CD14-positive monocyte (primary cell): ENCODE measurements at regions of chr1 and their contacts with region 1.

Region 1: DNA sequence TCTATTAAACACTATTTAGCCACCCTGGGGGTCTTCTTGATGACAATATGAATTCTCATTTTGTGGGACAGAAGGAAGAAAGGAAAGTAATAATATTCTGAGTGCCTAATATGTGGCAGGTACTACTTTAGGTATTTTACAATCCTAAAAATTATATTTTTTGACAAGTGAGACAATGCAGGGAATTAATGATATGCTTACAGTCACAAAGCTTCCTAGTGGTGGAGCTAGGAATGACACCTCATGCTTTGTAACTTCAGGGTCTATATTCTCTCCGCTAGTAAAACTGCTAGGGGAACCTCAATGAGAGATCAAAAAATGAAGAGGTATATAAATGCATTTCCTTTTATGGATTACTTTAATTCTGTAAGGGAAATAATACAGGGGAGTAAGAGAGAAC is 44.3 kb downstream of the TPR start:
- DNase-seq: no peak
- H3K4me3 ChIP-seq: no peak overlapping the region
- H3K4me3 Mint-ChIP-seq: no peak overlapping the region
- H3K27ac ChIP-seq: no peak overlapping the region
- H3K27ac Mint-ChIP-seq: no peak overlapping the region
- H3K4me1 ChIP-seq: no peaks in the 10 kb centered on the region
- H3K4me1 Mint-ChIP-seq: no peaks in the 10 kb centered on the region
- H3K27me3 ChIP-seq: no peaks in the 10 kb centered on the region
- H3K27me3 Mint-ChIP-seq: no peaks in the 10 kb centered on the region
- CTCF ChIP-seq: peak; percentile 69

Region 2: GRCh38 chr1:184716158-184716557 is 1614.6 kb before region 1 on chr1:
- intact Hi-C with region 1: loop called (anchors 10 kb)
- DNase-seq: no peak
- H3K4me3 ChIP-seq: no peak overlapping the region
- H3K4me3 Mint-ChIP-seq: no peak overlapping the region
- H3K27ac ChIP-seq: no peak overlapping the region
- H3K27ac Mint-ChIP-seq: no peak overlapping the region
- H3K4me1 ChIP-seq: no peaks in the 10 kb centered on the region
- H3K4me1 Mint-ChIP-seq: no peaks in the 10 kb centered on the region
- H3K27me3 ChIP-seq: no peaks in the 10 kb centered on the region
- H3K27me3 Mint-ChIP-seq: no peaks in the 10 kb centered on the region
- CTCF ChIP-seq: no peak

Region 3: GRCh38 chr1:185984113-185984836 is 346.5 kb before region 1 on chr1:
- intact Hi-C with region 1: no loop called
- DNase-seq: no peak
- H3K4me3 ChIP-seq: no peak overlapping the region
- H3K4me3 Mint-ChIP-seq: no peak overlapping the region
- H3K27ac ChIP-seq: no peak overlapping the region
- H3K27ac Mint-ChIP-seq: no peak overlapping the region
- H3K4me1 ChIP-seq: no peaks in the 10 kb centered on the region
- H3K4me1 Mint-ChIP-seq: no peaks in the 10 kb centered on the region
- H3K27me3 ChIP-seq: no peaks in the 10 kb centered on the region
- H3K27me3 Mint-ChIP-seq: peaks cover 1 to 2% (median 2%) of the 10 kb centered on the region in 3 donors
- CTCF ChIP-seq: no peak

Region 4: DNA sequence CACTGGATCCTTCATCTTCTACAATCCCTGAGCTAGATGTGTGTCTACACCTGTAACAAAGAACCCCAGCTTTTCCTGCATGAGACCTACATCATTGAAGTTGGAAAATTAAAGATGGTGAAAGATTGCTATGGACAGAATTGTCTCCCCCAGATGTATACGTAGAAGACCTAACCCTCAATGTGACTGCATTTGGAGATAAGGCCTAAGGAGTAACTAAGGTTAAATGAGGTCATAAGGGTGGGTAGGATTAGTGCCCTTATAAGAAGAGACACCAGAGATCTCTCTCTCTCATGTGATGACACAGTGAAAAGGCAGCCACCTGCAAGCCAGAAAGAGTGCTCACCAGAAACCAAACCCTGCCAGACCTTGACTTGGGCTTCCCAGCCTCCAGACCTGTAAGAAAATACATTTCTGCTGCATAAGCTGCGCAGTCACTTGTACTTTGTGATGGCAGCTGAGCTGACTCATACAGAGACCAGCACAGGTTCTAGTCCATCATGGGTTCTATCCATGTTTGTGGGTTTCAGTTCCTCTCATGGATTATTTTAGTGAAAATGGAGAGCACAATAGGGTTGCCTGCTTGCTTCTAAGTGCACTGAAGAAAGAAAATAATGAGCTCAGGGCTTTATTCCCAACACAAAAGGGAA is 136.5 kb before region 1 on chr1:
- intact Hi-C with region 1: no loop called
- DNase-seq: no peak
- H3K4me3 ChIP-seq: no peak overlapping the region
- H3K4me3 Mint-ChIP-seq: no peak overlapping the region
- H3K27ac ChIP-seq: no peak overlapping the region
- H3K27ac Mint-ChIP-seq: no peak overlapping the region
- H3K4me1 ChIP-seq: no peaks in the 10 kb centered on the region
- H3K4me1 Mint-ChIP-seq: no peaks in the 10 kb centered on the region
- H3K27me3 ChIP-seq: no peaks in the 10 kb centered on the region
- H3K27me3 Mint-ChIP-seq: peaks cover 0 to 2% (median 0%) of the 10 kb centered on the region in 3 donors
- CTCF ChIP-seq: no peak

Region 5: DNA sequence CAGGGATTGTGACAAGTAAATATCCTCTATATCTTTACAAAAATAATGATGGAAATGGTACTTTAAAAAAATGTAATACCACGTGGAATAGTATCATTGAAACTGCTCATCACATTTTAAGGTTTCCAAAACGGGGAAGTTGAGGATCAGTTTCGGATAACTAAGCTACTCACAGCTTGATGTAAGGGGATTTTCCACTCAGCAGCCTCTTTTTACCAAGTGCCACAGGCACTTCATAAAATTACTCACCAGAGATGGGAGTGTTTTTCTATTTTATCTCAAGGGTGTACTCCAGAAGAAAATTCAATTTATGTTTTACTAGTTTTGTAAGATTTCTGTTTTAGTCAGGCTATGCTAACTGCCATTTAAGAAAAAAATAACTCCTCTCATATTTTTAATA is 47.4 kb before region 1 on chr1:
- intact Hi-C with region 1: no loop called
- DNase-seq: no peak
- H3K4me3 ChIP-seq: no peak overlapping the region
- H3K4me3 Mint-ChIP-seq: no peak overlapping the region
- H3K27ac ChIP-seq: no peak overlapping the region
- H3K27ac Mint-ChIP-seq: no peak overlapping the region
- H3K4me1 ChIP-seq: no peaks in the 10 kb centered on the region
- H3K4me1 Mint-ChIP-seq: no peaks in the 10 kb centered on the region
- H3K27me3 ChIP-seq: no peaks in the 10 kb centered on the region
- H3K27me3 Mint-ChIP-seq: peaks cover 0 to 3% (median 0%) of the 10 kb centered on the region in 3 donors
- CTCF ChIP-seq: no peak

Region 6: DNA sequence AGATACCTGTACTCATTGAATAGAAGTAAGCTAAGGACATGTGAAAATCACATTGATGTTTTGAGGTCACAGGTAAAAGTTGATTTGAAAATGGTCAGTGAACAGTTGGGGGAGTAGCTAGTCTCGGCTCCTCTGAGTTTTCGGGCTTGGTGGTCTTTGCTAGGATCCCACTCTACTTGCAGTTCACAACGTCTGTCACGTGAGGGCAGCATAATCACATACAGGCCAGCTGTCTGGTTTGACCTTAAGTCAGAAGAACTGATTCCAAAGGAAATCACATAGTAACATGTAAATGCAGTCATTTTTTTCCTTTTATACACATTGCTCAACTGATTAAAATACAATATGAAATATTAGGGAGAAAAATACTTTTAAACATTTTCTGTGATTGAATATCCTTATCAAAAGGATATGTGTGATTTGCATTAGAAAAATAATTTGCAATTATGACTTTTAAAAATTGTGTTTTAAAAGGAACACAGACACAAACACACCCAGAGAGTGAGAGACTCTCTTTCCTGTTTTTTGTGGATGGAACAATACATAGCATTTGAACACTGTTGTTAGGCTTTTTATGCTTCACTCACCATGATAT is 152.0 kb after region 1 on chr1:
- intact Hi-C with region 1: no loop called
- DNase-seq: peak; percentile 27 to 57 (median 53)
- H3K4me3 ChIP-seq: no peak overlapping the region
- H3K4me3 Mint-ChIP-seq: no peak overlapping the region
- H3K27ac ChIP-seq: no peak overlapping the region
- H3K27ac Mint-ChIP-seq: no peak overlapping the region
- H3K4me1 ChIP-seq: no peaks in the 10 kb centered on the region
- H3K4me1 Mint-ChIP-seq: no peaks in the 10 kb centered on the region
- H3K27me3 ChIP-seq: no peaks in the 10 kb centered on the region
- H3K27me3 Mint-ChIP-seq: peaks cover 0 to 3% (median 2%) of the 10 kb centered on the region in 3 donors
- CTCF ChIP-seq: peak; percentile 94